AG04449 (cell line): ENCODE measurements at regions of chr1 and their contacts with region 1.

Region 1: GRCh38 chr1:153510984-153511410 is 24.8 kb downstream of the S100A6 start:
- DNase-seq: no peak
- H3K4me3 ChIP-seq: no peak overlapping the region
- CTCF ChIP-seq: peak; percentile 95

Region 2: DNA sequence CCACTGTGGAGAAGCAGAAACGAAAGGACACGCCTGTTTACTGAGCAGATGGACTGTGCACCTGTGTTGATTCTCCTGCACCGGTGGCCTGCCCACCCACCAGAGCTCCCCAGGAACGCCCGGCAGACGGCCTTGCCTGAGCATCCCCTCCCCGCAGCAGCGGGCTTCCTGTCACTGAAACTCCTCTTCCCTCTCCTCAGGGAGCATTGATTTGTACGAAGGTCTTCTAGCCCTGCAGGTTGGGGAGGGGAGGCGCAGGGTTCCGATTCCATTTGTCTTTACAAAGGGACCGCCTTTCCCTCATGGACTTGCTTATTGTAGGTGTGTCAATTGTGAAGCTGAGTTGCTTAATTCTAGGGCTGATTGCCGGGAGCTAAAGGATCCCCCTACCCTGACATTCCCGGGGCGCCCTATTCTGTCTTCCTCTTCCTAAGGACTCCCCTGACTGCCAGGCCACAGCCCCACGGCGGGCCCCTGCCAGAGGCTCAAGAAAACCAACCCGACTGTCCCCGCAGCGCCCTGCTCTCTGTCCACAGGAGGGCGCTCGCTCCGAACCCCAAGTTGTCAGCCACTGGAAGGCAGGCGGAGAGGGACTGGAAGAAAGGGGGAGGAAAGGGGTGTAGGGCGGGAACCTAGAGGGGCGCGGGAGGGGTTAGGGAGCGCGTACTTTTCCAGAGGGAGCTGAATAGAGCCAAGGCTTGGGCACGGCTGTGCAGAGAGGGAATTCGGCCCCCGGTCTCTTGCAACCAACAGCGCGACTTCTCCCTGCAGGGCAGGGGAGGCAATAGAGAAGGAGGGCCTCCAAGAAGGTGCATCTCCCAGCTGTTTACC is 22.0 kb after region 1 on chr1:
- CTCF ChIA-PET with region 1: interaction called, 143 read pairs
- POLR2A ChIA-PET with region 1: no interaction called
- DNase-seq: no peak
- H3K4me3 ChIP-seq: peak overlapping the region; percentile 99
- CTCF ChIP-seq: peak; percentile 99

Region 3: GRCh38 chr1:153577624-153578051 is 66.6 kb after region 1 on chr1:
- CTCF ChIA-PET with region 1: interaction called, 401 read pairs
- POLR2A ChIA-PET with region 1: interaction called, 7 read pairs
- DNase-seq: no peak
- H3K4me3 ChIP-seq: no peak overlapping the region
- CTCF ChIP-seq: no peak

Region 4: GRCh38 chr1:153608742-153609584 is 98.0 kb after region 1 on chr1:
- CTCF ChIA-PET with region 1: interaction called, 93 read pairs
- POLR2A ChIA-PET with region 1: interaction called, 3 read pairs
- DNase-seq: no peak
- H3K4me3 ChIP-seq: peak overlapping the region; percentile 58
- CTCF ChIP-seq: no peak

Region 5: GRCh38 chr1:153633716-153634665 is 123.0 kb after region 1 on chr1 and contains the start of gene CHTOP:
- CTCF ChIA-PET with region 1: interaction called, 71 read pairs
- POLR2A ChIA-PET with region 1: interaction called, 6 read pairs
- DNase-seq: peak; percentile 90
- H3K4me3 ChIP-seq: peak within 1 kb of the TSS; percentile 97
- CTCF ChIP-seq: no peak